Activated CD4-positive, alpha-beta memory T cell treated with anti-CD3 and anti-CD28 coated beads for 36 hours (primary cell): ENCODE measurements at regions of chr4 and their contacts with region 1.

Region 1: DNA sequence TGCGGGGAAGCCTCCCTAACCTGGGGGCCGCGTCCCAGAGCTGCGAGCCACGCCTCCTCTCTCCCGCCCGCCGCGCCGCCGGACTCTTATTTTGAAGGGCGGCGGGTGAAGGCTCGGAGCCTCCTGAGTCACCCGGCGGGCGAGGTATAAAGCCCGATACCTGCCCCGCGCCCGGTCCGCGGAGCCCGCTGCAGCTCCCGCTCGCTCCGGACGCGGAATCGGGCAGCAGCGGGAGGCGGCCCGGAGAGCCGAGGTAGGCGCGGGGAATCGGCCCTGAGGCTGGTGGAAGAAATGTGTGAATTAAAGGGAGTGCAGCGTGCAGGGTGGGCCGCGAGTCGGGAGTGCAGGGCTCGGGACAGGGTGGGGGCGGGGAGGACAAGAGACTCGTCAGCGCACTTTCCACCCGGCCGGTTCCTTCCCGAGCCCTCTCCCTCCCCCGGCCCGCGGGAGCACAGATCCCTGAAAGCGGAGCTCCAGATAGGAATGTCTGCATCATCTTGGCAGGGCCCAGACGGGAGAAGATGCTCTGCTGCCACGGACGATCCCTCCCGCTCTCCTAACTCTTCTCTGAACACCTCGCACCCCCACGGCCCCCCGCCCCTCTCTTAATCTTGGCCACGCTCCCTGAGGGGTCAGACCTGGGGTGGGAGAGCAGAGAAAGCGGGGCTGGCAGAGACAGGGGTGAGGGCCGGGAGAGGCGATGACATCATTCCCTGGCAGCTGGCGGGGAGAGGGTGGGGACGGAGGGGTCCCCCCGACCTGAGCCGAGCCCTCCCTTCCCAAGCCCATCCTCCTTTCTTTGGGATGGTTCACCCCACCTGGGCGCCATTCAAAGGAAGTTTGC is 177.9 kb downstream of the CBR4 start:
- DNase-seq: peak; percentile 75
- H3K4me3 Mint-ChIP-seq: peak overlapping the region; percentile 74
- H3K27ac Mint-ChIP-seq: peak overlapping the region; percentile 33
- H3K4me1 Mint-ChIP-seq: peaks cover 19% of the 10 kb centered on the region
- H3K27me3 Mint-ChIP-seq: peaks cover 47% of the 10 kb centered on the region

Region 2: DNA sequence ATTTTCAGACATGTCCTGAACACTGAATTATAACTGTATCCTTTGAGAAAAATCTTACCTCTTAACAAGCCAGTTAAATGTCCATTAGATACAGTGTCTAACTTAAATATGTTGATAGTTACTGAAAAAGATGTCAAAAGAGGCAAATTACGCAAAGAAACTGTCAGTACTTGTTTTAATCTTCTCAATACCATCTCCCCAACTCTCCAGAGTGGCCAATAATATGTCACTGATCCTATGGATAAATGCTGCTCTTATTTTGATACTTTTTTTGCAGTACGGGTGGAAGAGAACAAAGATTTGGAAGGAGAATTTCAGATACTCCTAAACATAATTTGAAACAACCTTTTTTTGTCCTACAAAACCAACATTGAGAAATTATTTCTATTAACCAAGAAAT is 14.8 kb before region 1 on chr4:
- CTCF ChIA-PET with region 1: interaction called, 3 read pairs
- POLR2A ChIA-PET with region 1: interaction called, 3 read pairs
- intact Hi-C with region 1: loop called (anchors 1 kb)
- DNase-seq: no peak
- H3K4me3 Mint-ChIP-seq: no peak overlapping the region
- H3K27ac Mint-ChIP-seq: no peak overlapping the region
- H3K4me1 Mint-ChIP-seq: peaks cover 10% of the 10 kb centered on the region
- H3K27me3 Mint-ChIP-seq: peaks cover 35% of the 10 kb centered on the region

Region 3: GRCh38 chr4:168877511-168878491 is 45.7 kb after region 1 on chr4:
- CTCF ChIA-PET with region 1: interaction called, 4 read pairs
- POLR2A ChIA-PET with region 1: no interaction called
- intact Hi-C with region 1: loop called (anchors 2 kb)
- DNase-seq: peak; percentile 35
- H3K4me3 Mint-ChIP-seq: peak overlapping the region; percentile 71
- H3K27ac Mint-ChIP-seq: no peak overlapping the region
- H3K4me1 Mint-ChIP-seq: peaks cover 15% of the 10 kb centered on the region
- H3K27me3 Mint-ChIP-seq: peaks cover 66% of the 10 kb centered on the region